GM12878 (cell line): ENCODE measurements at regions of chr7 and their contacts with region 1.

Region 1: GRCh38 chr7:100611974-100612729 is at the start of gene MOSPD3:
- DNase-seq: peak; percentile 99
- ATAC-seq: peak; percentile 98
- H3K4me3 ChIP-seq: peak within 1 kb of the TSS; percentile 75
- H3K27ac ChIP-seq: peak within 1 kb of the TSS; percentile 97
- H3K4me1 ChIP-seq: peaks cover 5% of the 10 kb centered on the region
- H3K27me3 ChIP-seq: peaks cover 0 to 3% of the 10 kb centered on the region in 2 experiments; a peak in 2 of 4 replicates
- CTCF ChIP-seq: no peak
- EP300 ChIP-seq: no peak
- POLR2A ChIP-seq: peak; percentile 90
- RAD21 ChIP-seq: no peak
- polyA plus RNA-seq, gene MOSPD3: 0.61 to 1.2 TPM

Region 2: DNA sequence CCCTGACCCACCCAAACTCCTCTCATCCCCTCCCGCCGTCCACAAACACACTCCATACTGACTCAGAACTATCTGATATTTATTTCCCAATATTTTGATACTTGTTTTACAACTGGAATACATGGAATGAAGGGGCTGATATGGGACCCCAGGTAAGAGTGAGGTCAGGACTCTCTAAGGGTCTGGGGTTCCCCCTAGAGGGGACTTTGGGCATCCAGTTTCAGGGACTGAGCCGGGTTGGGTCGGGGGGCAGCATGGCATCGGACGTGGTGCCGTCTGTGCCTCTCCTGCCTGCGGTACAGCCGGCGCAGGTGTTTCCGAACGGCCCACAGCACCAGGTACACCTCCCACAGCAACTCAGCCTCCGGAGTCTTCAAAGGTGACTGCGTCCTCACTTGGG is 155.6 kb before region 1 on chr7:
- CTCF ChIA-PET with region 1: no interaction called
- POLR2A ChIA-PET with region 1: no interaction called
- RAD21 ChIA-PET with region 1: no interaction called
- SMC1A ChIA-PET with region 1: no interaction called
- in situ Hi-C with region 1: no loop called
- intact Hi-C with region 1: no loop called
- DNase-seq: no peak
- ATAC-seq: no peak
- H3K4me3 ChIP-seq: no peak overlapping the region
- H3K27ac ChIP-seq: no peak overlapping the region
- H3K4me1 ChIP-seq: no peaks in the 10 kb centered on the region; the same call in 1 of the 2 replicates
- H3K27me3 ChIP-seq: no peaks in the 10 kb centered on the region
- CTCF ChIP-seq: no peak
- EP300 ChIP-seq: no peak
- POLR2A ChIP-seq: no peak
- RAD21 ChIP-seq: no peak

Region 3: DNA sequence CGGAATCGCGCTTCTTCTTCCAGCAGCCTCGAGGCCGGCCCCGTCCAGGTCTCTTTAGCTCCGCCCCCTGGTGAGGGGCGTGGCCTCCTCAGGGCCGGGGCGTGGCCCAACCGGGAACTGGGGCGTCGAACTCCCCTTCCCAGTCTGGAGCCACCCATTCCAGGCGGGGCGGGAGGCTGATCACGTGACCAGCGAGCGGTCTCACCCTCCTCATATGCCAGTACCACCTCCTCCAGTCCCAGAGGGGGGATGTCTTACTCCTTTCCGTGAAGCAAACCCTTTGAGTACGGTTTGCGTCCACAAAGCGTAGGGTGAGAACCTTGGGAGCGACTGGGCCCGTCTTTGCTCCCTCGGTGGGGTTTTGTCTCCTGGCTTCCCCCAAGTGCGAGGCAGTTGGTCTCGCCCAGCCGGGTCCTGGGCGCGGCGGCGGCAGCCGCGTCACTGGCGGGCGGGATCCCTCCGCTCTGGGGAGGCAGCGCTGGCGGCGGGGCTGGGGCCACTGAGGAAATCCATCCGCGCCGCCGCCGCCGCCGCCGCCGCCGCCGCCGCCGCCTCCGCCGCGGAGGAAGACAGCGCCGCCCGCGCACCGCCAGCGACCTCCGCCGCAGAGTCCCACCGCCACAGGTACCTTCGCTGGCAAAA is 61.3 kb after region 1 on chr7 and contains the start of gene GNB2:
- CTCF ChIA-PET with region 1: interaction called, 3 read pairs
- POLR2A ChIA-PET with region 1: interaction called, 5 read pairs
- RAD21 ChIA-PET with region 1: interaction called, 3 read pairs
- SMC1A ChIA-PET with region 1: interaction called, 3 read pairs
- in situ Hi-C with region 1: no loop called
- intact Hi-C with region 1: loop called (anchors 2 kb)
- DNase-seq: peak; percentile 95
- ATAC-seq: peak; percentile 72
- H3K4me3 ChIP-seq: peak within 1 kb of the TSS; percentile 98
- H3K27ac ChIP-seq: peak within 1 kb of the TSS; percentile 92
- H3K4me1 ChIP-seq: no peaks in the 10 kb centered on the region; the same call in 1 of the 2 replicates
- H3K27me3 ChIP-seq: no peaks in the 10 kb centered on the region
- CTCF ChIP-seq: no peak
- EP300 ChIP-seq: 0 out of 4 replicates have a peak, but pooled peaks of 1 of the 2 experiments have one; percentile 37
- POLR2A ChIP-seq: peak; percentile 75
- RAD21 ChIP-seq: no peak
- polyA plus RNA-seq, gene GNB2: 0.35 to 4.7 TPM